ENCODE measurements at regions of chr13 and their contacts with region 1.

Region 1: GRCh38 chr13:97109841-97110492 is 112.2 kb upstream of the MBNL2 start:
- DNase-seq: peak; percentile 87 to 93 (median 90)
- H3K4me3 ChIP-seq: peak overlapping the region in 2 of 7 experiments; percentile 15 to 43
- H3K27ac ChIP-seq: no peak overlapping the region
- H3K4me1 ChIP-seq: peaks cover 0 to 7% (median 6%) of the 10 kb centered on the region in 4 experiments
- H3K27me3 ChIP-seq: peaks cover 0 to 40% (median 22%) of the 10 kb centered on the region in 5 experiments

Region 2: GRCh38 chr13:96851856-96852445 is 258.0 kb before region 1 on chr13:
- CTCF ChIA-PET with region 1: no interaction called
- POLR2A ChIA-PET with region 1: no interaction called
- DNase-seq: no peak
- H3K4me3 ChIP-seq: no peak overlapping the region
- H3K27ac ChIP-seq: no peak overlapping the region
- H3K4me1 ChIP-seq: peaks cover 0 to 5% (median 4%) of the 10 kb centered on the region in 4 experiments
- H3K27me3 ChIP-seq: no peaks in the 10 kb centered on the region

Region 3: DNA sequence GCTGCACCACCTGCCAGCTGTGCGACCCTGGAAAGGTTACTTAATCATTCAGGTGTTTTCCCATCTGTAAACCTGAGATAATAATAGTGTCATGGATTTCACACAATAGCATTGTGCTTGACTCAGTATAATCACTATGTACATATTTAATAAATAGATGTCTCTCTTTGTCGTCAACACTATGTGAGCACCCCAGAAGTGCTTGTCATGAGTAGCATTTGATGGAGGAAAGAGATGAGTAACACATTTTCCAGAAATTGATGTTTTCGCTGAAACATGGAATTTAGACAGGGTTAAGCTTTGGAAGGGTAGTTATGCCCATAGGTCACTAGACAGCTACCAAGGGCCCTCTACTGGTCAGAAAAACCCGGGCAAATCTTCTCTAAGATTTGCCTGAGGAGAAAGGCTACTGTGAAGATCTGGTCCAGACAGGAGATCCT is 102.7 kb after region 1 on chr13:
- CTCF ChIA-PET with region 1: interaction called, 58 read pairs
- POLR2A ChIA-PET with region 1: interaction called, 4 read pairs
- DNase-seq: peak in 1 of 3 donors; percentile 28
- H3K4me3 ChIP-seq: no peak overlapping the region
- H3K27ac ChIP-seq: no peak overlapping the region
- H3K4me1 ChIP-seq: peaks cover 0 to 2% (median under 1%) of the 10 kb centered on the region in 4 experiments
- H3K27me3 ChIP-seq: peaks cover 7 to 64% (median 43%) of the 10 kb centered on the region in 5 experiments

Region 4: GRCh38 chr13:97221989-97222700 is 112.2 kb after region 1 on chr13 and contains the start of gene MBNL2:
- CTCF ChIA-PET with region 1: interaction called, 15 read pairs
- POLR2A ChIA-PET with region 1: no interaction called
- DNase-seq: peak; percentile 86 to 96 (median 94)
- H3K4me3 ChIP-seq: peak within 1 kb of the TSS in 6 of 7 experiments; percentile 82 to 99 (median 89)
- H3K27ac ChIP-seq: peak within 1 kb of the TSS; percentile 69 to 91
- H3K4me1 ChIP-seq: peaks cover 34 to 48% (median 41%) of the 10 kb centered on the region in 4 experiments
- H3K27me3 ChIP-seq: no peaks in the 10 kb centered on the region

Region 5: GRCh38 chr13:97344265-97345175 is 234.6 kb after region 1 on chr13:
- CTCF ChIA-PET with region 1: interaction called, 112 read pairs
- POLR2A ChIA-PET with region 1: no interaction called
- DNase-seq: peak; percentile 47 to 75 (median 62)
- H3K4me3 ChIP-seq: no peak overlapping the region
- H3K27ac ChIP-seq: no peak overlapping the region
- H3K4me1 ChIP-seq: no peaks in the 10 kb centered on the region
- H3K27me3 ChIP-seq: no peaks in the 10 kb centered on the region

Region 6: DNA sequence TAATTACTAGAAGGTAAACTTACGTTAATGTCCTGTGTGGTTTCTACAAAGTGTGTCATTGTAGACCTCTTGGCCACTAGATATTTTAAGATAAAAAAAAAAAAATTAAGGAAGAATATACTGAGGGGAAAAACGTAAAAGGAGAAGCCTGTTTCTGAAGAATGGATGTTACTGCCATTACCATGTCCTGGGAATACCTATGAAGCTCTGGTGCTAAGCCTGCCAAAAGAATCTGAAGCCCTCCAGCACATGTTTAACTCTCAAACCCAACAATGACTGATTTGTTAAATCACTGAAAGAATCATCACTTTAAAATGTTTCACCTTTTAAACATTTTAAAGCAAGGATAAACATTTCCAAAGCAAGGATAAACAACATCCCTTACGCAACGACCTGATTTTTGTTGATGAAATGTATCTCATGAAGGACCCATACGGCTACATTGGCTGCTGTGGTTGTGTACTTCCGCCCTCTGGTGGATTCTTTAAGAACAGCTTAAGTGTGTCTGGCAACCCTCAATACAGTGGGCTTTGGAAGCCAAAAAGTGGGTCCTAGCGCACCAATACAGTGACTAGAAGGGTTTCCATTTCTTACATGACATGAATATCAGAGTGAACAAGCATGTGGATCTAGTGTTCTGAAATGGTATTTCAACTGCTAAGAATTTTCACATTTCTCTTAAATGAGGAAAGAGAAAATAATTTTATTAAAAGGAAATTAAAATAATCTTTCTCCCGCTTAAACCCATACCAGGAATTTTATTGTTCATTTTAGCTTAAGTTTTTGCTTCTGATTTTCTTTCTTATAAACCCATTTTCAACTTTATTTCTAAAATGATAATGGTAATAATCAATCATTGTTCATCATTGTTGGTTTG is 249.5 kb after region 1 on chr13:
- CTCF ChIA-PET with region 1: interaction called, 86 read pairs
- POLR2A ChIA-PET with region 1: no interaction called
- DNase-seq: peak; percentile 70 to 83 (median 79)
- H3K4me3 ChIP-seq: no peak overlapping the region
- H3K27ac ChIP-seq: no peak overlapping the region
- H3K4me1 ChIP-seq: no peaks in the 10 kb centered on the region
- H3K27me3 ChIP-seq: no peaks in the 10 kb centered on the region

Region 7: GRCh38 chr13:97539651-97540610 is 430.0 kb after region 1 on chr13:
- CTCF ChIA-PET with region 1: no interaction called
- POLR2A ChIA-PET with region 1: no interaction called
- DNase-seq: no peak
- H3K4me3 ChIP-seq: no peak overlapping the region
- H3K27ac ChIP-seq: no peak overlapping the region
- H3K4me1 ChIP-seq: no peaks in the 10 kb centered on the region
- H3K27me3 ChIP-seq: no peaks in the 10 kb centered on the region

Measured in common myeloid progenitor, CD34-positive (primary cell).